HEK293 (cell line): ENCODE measurements at regions of chr5 and their contacts with region 1.

Region 1: GRCh38 chr5:110623874-110624273 is 102.6 kb downstream of the TMEM232 start:
- H3K4me3 ChIP-seq: no peak overlapping the region
- H3K27ac ChIP-seq: no peak overlapping the region
- H3K4me1 ChIP-seq: no peaks in the 10 kb centered on the region
- CTCF ChIP-seq: no peak

Region 2: GRCh38 chr5:110441035-110441434 is 182.8 kb before region 1 on chr5:
- CTCF ChIA-PET with region 1: interaction called, 12 read pairs
- POLR2A ChIA-PET with region 1: no interaction called
- H3K4me3 ChIP-seq: no peak overlapping the region
- H3K27ac ChIP-seq: no peak overlapping the region
- H3K4me1 ChIP-seq: no peaks in the 10 kb centered on the region
- CTCF ChIP-seq: no peak